Esophagus squamous epithelium (tissue), 5 donors: ENCODE measurements at regions of chr12 and their contacts with region 1.

Region 1: DNA sequence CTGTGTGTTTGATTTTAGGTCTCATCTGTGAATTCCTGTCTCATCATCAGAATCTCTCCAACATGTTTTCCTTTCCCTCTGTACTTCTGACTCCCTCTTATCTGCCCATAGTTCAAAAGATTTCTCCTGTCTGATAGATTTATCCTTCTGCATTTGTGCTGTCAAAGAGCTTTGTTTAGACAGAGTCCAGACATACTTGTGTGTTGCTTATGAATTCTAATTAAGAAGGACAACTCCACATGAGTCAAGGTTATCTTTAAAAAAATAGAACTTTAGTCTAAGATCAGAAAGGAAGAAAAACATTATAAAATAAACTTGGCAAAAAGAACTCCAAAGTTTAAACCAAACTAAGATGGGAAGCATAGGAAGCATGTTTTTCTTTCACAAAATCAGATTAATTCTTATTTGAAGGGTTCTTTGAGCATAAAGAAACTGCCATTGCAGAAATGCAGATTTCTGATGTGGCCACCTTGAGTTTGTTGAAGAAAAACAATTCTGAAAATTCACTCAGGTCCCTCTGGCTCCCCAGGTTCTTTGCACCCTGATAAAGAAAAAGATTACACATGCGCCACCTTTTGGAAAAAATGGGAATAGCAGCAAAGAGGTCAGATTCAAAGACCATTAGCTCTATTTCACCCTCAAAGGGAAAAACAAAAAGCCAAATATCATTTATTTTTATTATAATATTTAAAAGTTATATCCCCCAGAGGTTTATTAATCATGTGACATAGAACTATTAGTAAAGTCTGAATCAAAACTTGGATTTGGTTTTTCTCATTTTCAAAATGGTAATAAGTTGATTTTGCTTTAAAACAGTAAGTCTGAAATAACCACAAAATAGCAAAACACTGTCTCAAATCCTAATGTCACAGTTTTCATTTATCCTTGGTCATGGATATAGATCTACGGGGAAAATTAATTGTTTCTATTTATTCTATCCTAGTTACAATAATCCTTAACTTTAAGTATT is 143.7 kb upstream of the DCN start:
- DNase-seq: no peak
- H3K4me3 ChIP-seq: peak overlapping the region in 1 of 4 donors; percentile 22
- H3K27ac ChIP-seq: peak overlapping the region in 2 of 4 donors; percentile 60 to 61
- H3K4me1 ChIP-seq: peaks cover 0 to 18% (median 0%) of the 10 kb centered on the region in 3 donors
- H3K27me3 ChIP-seq: no peaks in the 10 kb centered on the region
- CTCF ChIP-seq: peak; percentile 42 to 82 (median 76)
- POLR2A ChIP-seq: no peak

Region 2: DNA sequence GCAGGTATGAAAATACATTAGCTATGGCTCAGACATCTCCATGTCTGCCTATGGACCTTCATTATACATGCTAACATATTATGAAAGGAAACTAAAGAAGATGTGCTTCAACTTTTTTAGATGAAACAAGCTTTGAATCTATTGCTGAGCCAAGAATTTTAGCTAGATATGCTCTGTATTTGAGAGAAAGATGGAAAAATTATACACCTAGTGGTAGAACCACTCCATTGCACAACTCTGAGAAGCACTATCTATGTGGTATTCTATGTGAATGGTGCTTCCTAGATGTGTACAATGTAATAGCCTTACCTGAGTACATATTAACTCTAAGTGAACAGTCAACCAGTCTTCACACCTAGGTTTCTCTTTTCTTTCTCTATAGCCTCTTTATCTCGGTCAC is 338.8 kb before region 1 on chr12:
- intact Hi-C with region 1: loop called (anchors 10 kb)
- DNase-seq: no peak
- H3K4me3 ChIP-seq: no peak overlapping the region
- H3K27ac ChIP-seq: no peak overlapping the region
- H3K4me1 ChIP-seq: no peaks in the 10 kb centered on the region
- H3K27me3 ChIP-seq: no peaks in the 10 kb centered on the region
- CTCF ChIP-seq: peak in 1 of 6 experiments; percentile 14
- POLR2A ChIP-seq: no peak

Region 3: GRCh38 chr12:91178139-91178561 is 148.2 kb before region 1 on chr12:
- intact Hi-C with region 1: loop called (anchors 5 kb)
- DNase-seq: no peak
- H3K4me3 ChIP-seq: peak overlapping the region; percentile 23 to 62 (median 42)
- H3K27ac ChIP-seq: peak overlapping the region; percentile 49 to 85 (median 78)
- H3K4me1 ChIP-seq: peaks cover 0 to 17% (median 0%) of the 10 kb centered on the region in 3 donors
- H3K27me3 ChIP-seq: no peaks in the 10 kb centered on the region
- CTCF ChIP-seq: peak in 5 of 6 experiments; percentile 28 to 65 (median 55)
- POLR2A ChIP-seq: no peak